ENCODE measurements at regions of chr3 and their contacts with region 1.

Region 1: GRCh38 chr3:124887177-124887931 is at the start of gene ITGB5:
- DNase-seq: peak; percentile 82
- ATAC-seq: peak; percentile 88 to 95
- total RNA-seq, gene ITGB5: 86.1 to 119 TPM

Region 2: GRCh38 chr3:124202754-124203153 is 684.6 kb before region 1 on chr3:
- intact Hi-C with region 1: no loop called
- DNase-seq: peak; percentile 79
- ATAC-seq: peak; percentile 94 to 96

Region 3: GRCh38 chr3:124834723-124835718 is 52.3 kb before region 1 on chr3:
- intact Hi-C with region 1: loop called in 1 of 2 experiments (anchors 10 kb)
- DNase-seq: peak; percentile 32
- ATAC-seq: peak in 1 of 2 donors; percentile 68